ENCODE measurements at regions of chr10 and their contacts with region 1.

Region 1: DNA sequence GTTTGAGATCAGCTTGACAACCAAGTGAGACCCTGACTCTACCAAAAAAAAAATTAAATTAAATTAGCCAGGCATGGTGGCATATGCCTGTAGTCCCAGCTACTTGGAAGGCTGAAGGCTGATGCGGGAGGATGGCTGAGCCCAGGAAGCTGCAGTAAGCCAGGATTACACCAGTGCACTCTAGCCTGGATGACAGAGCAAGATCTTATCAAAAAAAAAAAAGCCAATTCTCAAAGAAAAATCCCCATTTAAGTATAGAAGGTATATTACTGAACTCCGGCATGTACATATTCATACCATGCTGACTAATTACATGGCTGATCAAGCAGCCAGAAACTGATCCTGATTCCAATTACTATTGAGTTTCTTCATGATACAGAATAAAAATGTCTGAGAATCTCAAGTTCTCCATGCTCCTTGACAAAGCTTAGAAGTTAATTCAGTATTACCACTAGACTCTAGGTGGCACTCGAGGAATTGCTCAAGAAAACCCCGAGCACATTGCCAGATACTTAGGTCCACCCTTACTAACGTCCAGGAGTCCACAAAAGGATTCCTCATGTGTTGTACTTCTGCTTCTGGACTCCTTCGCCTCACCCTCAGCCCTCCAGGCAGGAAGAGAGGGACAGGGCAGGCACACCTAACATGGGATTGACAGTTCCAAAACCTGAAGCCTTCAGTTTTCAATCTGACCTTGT is 148.9 kb downstream of the PARD3 start:
- DNase-seq: no peak
- ATAC-seq: peak; percentile 88
- H3K4me3 ChIP-seq: no peak overlapping the region
- H3K27ac ChIP-seq: no peak overlapping the region
- H3K4me1 ChIP-seq: no peaks in the 10 kb centered on the region
- H3K27me3 ChIP-seq: no peaks in the 10 kb centered on the region

Region 2: GRCh38 chr10:34655286-34656170 is 10.6 kb before region 1 on chr10:
- intact Hi-C with region 1: no loop called
- DNase-seq: no peak
- ATAC-seq: no peak
- H3K4me3 ChIP-seq: no peak overlapping the region
- H3K27ac ChIP-seq: no peak overlapping the region
- H3K4me1 ChIP-seq: no peaks in the 10 kb centered on the region
- H3K27me3 ChIP-seq: no peaks in the 10 kb centered on the region

Region 3: DNA sequence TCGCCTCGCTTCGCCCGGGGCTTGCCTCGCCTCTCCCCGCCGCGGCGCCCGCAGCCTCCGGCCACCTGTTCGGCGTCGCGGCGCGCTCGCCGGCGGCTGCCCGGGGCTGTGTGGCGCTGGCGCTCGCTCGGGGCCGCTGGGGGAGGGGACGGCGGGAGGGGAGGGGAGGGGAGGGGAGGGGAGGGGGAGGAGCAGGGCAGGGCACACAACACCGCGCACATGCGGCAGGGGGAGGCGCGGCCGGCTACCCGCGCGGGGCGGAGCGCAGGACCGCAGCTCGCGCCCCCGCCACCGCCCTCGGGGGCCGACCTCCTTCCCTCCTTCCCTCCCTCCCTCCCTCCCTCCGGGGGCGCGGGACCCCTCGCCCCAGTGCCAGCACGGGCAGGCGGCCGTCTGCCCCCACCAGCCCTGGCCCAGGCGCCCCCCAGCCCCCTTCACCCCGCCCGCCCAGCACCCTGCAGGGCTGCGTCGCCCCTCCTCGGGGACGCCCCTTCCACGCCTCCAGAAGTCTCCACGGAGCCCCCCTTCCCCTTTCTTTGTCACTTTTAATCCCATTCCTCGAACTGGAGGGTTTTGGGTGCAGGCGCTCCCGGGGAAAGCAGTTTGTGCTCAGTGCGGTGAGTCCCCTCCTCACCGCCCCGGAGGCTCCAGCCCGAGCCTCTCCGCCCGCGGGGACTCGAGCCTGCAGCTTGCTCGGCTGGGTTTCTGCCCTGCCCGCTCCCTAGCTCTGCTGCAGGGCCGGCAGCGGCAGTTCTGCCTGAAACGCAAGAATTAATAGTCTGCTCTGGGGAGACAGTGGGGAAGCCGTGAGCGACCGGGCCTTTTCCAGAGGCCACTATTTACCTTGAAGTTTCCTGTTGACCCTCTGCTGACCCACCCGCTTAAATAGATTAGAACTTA is 149.3 kb after region 1 on chr10 and contains the start of gene PARD3:
- intact Hi-C with region 1: loop called (anchors 5 to 10 kb)
- DNase-seq: peak; percentile 56 to 86
- ATAC-seq: peak; percentile 78
- H3K4me3 ChIP-seq: peak within 1 kb of the TSS; percentile 83 to 86
- H3K27ac ChIP-seq: peak within 1 kb of the TSS in 1 of 2 donors; percentile 9
- H3K4me1 ChIP-seq: no peaks in the 10 kb centered on the region
- H3K27me3 ChIP-seq: no peaks in the 10 kb centered on the region
- total RNA-seq, gene PARD3: 27.7 to 33.0 TPM

Region 4: GRCh38 chr10:35027567-35027966 is 361.4 kb after region 1 on chr10:
- intact Hi-C with region 1: loop called (anchors 5 kb)
- DNase-seq: no peak
- ATAC-seq: no peak
- H3K4me3 ChIP-seq: no peak overlapping the region
- H3K27ac ChIP-seq: no peak overlapping the region
- H3K4me1 ChIP-seq: no peaks in the 10 kb centered on the region
- H3K27me3 ChIP-seq: no peaks in the 10 kb centered on the region

Region 5: DNA sequence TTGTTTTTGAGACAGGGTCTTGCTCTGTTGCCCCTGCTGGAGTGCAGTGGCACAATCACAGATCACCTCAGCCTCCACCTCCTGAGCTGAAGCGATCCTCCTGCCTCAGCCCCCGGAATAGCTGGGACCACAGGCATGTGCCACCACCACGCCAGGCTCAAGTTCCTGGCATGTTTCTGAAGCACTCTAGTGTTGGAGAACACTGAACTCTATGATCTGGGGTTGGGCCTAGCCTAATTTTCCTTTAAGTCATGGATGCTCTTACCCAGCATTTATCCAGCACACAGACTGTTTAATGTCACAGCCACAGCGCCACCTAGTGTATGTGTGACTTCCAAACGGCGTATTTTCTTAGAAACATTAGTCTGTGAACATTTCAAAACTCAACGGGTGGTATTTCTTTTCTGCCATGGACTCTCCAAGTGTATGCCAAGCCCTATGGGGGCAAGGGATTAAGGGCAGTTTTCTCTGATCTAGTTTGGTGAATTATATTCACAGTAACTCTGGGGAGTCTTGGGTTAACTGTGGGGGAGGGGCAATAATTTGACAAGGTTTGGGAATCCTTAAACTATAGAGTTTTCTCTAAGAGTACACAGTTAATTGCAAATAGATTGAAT is 552.3 kb after region 1 on chr10:
- intact Hi-C with region 1: loop called in 1 of 2 experiments (anchors 10 kb)
- DNase-seq: peak; percentile 90 to 91
- ATAC-seq: peak; percentile 85
- H3K4me3 ChIP-seq: no peak overlapping the region
- H3K27ac ChIP-seq: no peak overlapping the region
- H3K4me1 ChIP-seq: no peaks in the 10 kb centered on the region
- H3K27me3 ChIP-seq: no peaks in the 10 kb centered on the region